Heart left ventricle (tissue), 16 donors: ENCODE measurements at regions of chr1 and their contacts with region 1.

Region 1: DNA sequence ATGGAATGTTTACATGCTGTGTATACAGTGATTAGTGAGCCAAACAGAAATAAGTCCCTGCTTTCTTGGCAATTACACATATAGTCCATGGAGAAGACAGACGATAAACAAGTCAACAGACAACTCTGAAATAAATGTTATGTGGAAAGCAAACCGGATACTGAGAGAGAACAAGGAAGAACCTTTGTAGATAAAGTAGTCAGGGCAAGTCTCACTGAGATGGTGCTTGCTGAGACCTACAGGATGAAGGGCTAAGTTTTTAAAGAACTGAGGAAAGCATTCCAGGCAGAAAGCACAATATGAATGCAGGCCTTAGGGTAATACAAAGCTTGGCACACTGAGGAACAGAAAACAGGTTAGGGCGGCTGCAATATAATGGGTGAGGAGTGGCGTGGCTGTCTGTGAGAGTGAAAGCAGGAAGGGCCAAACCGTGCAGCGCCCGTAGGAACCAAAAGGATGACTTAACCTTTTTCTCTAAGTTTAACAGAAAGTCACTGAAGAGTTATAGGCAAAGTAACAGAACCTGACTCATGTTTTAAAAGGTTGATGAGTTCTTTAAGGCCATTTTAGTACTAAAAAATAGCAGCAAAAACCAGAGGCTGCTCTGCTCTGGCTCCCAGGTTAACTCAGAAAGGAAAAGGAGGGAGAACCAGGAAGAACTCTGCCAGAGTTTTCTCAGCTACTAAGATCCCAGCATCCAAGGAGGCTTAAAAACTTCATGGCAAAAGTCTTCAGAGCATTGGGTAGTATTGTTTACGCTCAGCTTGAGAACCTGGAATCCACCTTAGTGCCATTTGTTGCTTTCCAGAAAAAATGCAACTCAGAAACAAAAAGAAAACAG is 8.7 kb upstream of the TTF2 start:
- DNase-seq: no peak
- ATAC-seq: peak in 1 of 4 donors; percentile 51
- H3K4me3 ChIP-seq: peak overlapping the region in 5 of 12 donors; percentile 6 to 28 (median 20)
- H3K27ac ChIP-seq: peak overlapping the region in 4 of 12 donors; percentile 24 to 71 (median 39)
- H3K4me1 ChIP-seq: peaks cover 0 to 32% (median 0%) of the 10 kb centered on the region in 12 donors
- H3K27me3 ChIP-seq: no peaks in the 10 kb centered on the region
- CTCF ChIP-seq: no peak
- POLR2A ChIP-seq: no peak

Region 2: GRCh38 chr1:116724765-116725375 is 326.6 kb before region 1 on chr1:
- intact Hi-C with region 1: loop called in 3 of 10 experiments (anchors 2 to 5 kb)
- DNase-seq: peak in 4 of 5 donors; percentile 44 to 51 (median 47)
- ATAC-seq: peak in 1 of 4 donors; percentile 67
- H3K4me3 ChIP-seq: no peak overlapping the region
- H3K27ac ChIP-seq: no peak overlapping the region
- H3K4me1 ChIP-seq: peaks cover 0 to 6% (median 0%) of the 10 kb centered on the region in 12 donors
- H3K27me3 ChIP-seq: no peaks in the 10 kb centered on the region
- CTCF ChIP-seq: peak; percentile 54 to 87 (median 76)
- POLR2A ChIP-seq: no peak

Region 3: GRCh38 chr1:116737020-116737854 is 314.2 kb before region 1 on chr1:
- intact Hi-C with region 1: loop called (anchors 1 to 5 kb)
- DNase-seq: peak in 4 of 5 donors; percentile 28 to 63 (median 39)
- ATAC-seq: peak in 3 of 4 donors; percentile 60 to 78 (median 70)
- H3K4me3 ChIP-seq: no peak overlapping the region
- H3K27ac ChIP-seq: peak overlapping the region in 1 of 12 donors; percentile 83
- H3K4me1 ChIP-seq: peaks cover 0 to 31% (median 0%) of the 10 kb centered on the region in 12 donors
- H3K27me3 ChIP-seq: no peaks in the 10 kb centered on the region
- CTCF ChIP-seq: peak; percentile 49 to 84 (median 71)
- POLR2A ChIP-seq: no peak

Region 4: DNA sequence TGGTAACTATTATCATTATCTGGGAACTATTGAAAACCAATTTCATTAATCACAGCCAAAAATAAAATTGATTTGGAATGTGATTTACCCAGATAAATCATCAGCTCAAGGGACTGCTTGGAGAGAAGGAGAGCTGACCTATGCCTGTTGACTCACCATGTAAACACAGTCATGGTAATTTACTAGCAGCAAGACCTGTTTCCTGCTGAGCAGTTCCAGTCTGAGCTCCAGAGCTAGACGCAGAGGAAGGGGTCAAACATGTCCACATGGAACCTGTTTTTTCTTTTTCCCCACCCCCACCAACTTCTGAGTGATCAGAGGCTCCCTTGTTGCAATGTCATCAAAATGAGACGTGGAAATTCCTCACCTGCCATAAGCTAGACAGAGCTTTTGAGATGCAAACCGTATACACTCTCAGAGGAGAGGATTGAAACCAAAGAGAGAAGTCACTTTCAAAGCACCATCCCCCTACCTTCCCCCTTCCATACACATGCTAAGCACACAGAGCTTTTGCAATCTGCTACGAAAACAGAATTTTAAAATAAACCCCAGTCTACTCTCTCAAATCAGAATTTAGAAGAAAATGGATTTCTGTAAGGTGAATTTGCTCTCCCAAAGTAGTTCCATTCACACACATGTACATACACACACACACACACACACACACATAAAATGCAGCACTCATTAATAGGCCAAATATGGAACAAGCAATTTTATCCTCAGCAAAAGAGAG is 197.6 kb before region 1 on chr1:
- intact Hi-C with region 1: loop called (anchors 2 to 10 kb)
- DNase-seq: no peak
- ATAC-seq: peak in 1 of 4 donors; percentile 76
- H3K4me3 ChIP-seq: no peak overlapping the region
- H3K27ac ChIP-seq: peak overlapping the region in 1 of 12 donors; percentile 4
- H3K4me1 ChIP-seq: peaks cover 0 to 29% (median 7%) of the 10 kb centered on the region in 12 donors
- H3K27me3 ChIP-seq: no peaks in the 10 kb centered on the region
- CTCF ChIP-seq: no peak
- POLR2A ChIP-seq: no peak